ENCODE measurements at regions of chr7 and their contacts with region 1.

Region 1: DNA sequence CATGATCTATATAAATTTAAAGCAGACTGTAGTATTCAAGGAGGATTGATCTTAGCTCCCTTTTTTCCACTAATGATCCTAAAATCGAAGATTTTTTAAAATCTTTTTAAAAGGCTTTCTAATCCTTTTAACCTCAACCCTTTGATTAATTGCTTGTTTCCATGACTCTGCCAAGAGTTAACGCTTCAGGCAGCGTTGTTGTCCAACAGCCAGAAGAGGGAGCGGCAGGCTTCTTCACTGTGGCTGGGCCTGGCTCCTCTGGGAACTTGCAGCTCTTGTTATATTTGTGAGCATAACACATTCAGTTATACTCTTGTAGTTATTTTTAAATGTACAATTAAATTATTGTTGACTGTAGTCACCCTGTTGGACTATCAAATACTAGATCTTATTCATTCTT is 26.3 kb downstream of the CRCP start:
- DNase-seq: peak; percentile 56
- H3K4me3 ChIP-seq: no peak overlapping the region
- H3K27ac ChIP-seq: peak overlapping the region; percentile 7
- H3K4me1 ChIP-seq: peaks cover 20% of the 10 kb centered on the region
- H3K27me3 ChIP-seq: no peaks in the 10 kb centered on the region
- CTCF ChIP-seq: peak; percentile 40 to 76

Region 2: DNA sequence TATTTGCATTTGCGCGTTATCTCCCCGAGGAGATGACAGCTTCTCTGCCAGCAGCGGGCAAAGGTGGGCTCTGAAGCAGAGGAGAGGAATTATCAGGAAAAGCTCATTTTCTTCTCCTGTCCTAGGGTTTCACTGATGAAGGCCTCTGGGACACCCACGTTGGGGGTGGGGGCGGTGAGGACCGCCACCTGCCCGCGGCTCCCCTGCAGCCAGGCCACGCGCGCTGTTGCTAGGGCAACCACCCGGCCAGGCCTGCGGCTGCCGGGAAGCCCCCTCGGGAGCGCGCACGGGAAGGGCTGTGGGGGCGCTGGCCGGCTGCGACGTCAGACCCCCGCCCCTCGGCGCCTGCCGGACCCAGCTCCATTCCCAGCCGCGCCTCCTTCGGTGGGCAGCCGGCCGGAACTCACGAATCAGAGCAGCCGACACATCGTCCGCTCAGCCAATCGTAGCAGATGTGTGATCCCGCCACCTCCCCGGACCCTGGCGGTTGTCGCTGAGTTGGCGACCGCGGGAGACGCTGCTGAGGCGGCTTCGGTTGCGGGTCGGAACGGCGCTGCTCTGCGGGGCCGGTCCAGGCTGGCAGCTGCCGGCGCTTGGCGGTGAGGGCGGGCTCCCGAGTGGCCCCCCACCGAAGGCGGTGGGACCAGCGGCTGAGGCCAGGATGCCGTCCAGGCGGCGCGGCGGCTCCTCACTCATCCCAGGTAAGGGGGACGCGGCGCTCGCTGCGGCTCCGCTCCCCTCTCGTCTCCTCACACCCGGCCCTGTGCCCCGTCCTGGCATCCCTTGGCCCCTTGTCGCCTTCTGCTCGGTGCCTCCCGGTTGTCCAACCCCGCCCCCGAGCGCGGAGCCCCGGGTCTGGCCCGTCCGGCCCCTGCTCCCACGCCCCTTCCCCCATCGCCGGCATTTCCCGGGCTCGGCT is 64.2 kb after region 1 on chr7 and contains the start of gene TPST1:
- CTCF ChIA-PET with region 1: no interaction called
- dilution Hi-C with region 1: no loop called
- in situ Hi-C with region 1: no loop called
- intact Hi-C with region 1: loop called (anchors 5 kb)
- DNase-seq: peak; percentile 82
- H3K4me3 ChIP-seq: peak within 1 kb of the TSS; percentile 86 to 99 (median 87)
- H3K27ac ChIP-seq: peak within 1 kb of the TSS; percentile 66
- H3K4me1 ChIP-seq: peaks cover 22% of the 10 kb centered on the region
- H3K27me3 ChIP-seq: no peaks in the 10 kb centered on the region
- CTCF ChIP-seq: peak in 1 of 2 donors; percentile 67
- total RNA-seq, gene TPST1: 36.8 to 90.7 TPM

Region 3: DNA sequence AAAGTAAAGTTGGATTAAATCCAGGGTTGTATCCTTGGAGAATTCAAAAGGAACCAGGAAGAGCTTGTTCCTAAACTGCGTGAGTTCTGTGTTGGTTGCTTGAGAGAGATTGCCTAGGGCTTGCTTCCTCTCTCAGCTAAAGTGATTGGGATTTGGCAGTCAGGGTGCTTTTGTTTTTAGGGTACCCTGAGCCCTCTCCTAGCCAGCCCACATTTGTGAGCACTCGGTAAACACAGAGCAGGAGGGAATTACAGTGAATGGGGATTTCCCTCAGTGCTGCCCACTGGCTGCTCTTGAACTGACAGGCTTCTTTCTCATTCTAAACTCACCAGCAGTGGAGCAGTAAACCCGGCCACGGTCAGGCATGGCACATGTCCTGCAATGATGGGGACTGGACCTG is 211.1 kb after region 1 on chr7:
- CTCF ChIA-PET with region 1: no interaction called
- dilution Hi-C with region 1: no loop called
- in situ Hi-C with region 1: no loop called
- intact Hi-C with region 1: loop called (anchors 1 kb)
- DNase-seq: peak; percentile 76
- H3K4me3 ChIP-seq: peak overlapping the region in 2 of 3 experiments; percentile 31 to 38
- H3K27ac ChIP-seq: peak overlapping the region; percentile 92
- H3K4me1 ChIP-seq: peaks cover 55% of the 10 kb centered on the region
- H3K27me3 ChIP-seq: no peaks in the 10 kb centered on the region
- CTCF ChIP-seq: no peak

Region 4: DNA sequence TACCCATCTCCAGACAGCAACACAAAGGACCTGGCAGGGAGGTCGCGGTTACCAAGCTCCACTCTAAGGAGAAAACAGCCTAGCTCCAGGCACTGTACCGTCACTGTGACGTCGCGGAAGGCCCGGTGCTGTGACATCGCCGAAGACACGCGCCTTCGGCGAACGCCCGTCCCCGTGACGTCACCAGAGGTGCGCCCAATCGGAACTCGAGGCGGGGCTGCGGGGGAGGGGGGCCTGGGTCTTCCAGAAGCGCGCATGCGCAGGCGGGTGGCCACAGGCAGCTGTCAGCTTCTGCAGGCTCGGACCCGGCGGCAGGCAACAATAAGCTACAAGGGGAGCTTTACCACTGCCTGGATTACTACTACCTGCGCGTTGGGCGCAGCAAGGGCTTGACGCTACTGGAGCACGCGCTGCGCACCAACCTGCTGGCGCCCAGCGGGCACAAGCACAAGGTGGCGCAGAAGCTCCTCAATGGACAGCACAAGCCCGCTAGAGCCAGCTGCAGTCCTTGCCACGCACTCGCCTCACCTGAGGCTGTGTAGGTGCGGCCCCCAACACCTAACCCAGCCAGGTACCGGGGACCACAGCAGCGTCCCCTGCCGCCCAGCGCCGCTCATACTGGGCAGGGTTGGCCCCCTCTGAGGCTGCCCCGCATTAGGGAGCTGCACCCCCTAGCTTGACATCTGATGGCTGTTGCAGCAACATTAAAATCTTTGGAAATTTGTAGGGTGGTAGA is 272.6 kb after region 1 on chr7:
- CTCF ChIA-PET with region 1: no interaction called
- dilution Hi-C with region 1: no loop called
- in situ Hi-C with region 1: no loop called
- intact Hi-C with region 1: loop called (anchors 10 kb)
- DNase-seq: peak; percentile 73
- H3K4me3 ChIP-seq: peak overlapping the region; percentile 26 to 57 (median 45)
- H3K27ac ChIP-seq: peak overlapping the region; percentile 12
- H3K4me1 ChIP-seq: peaks cover 4% of the 10 kb centered on the region
- H3K27me3 ChIP-seq: no peaks in the 10 kb centered on the region
- CTCF ChIP-seq: peak; percentile 42 to 63

Region 5: GRCh38 chr7:66493235-66494181 is 352.6 kb after region 1 on chr7:
- CTCF ChIA-PET with region 1: no interaction called
- dilution Hi-C with region 1: no loop called
- in situ Hi-C with region 1: no loop called
- intact Hi-C with region 1: loop called (anchors 1 kb)
- DNase-seq: peak; percentile 95
- H3K4me3 ChIP-seq: peak overlapping the region; percentile 66 to 85 (median 82)
- H3K27ac ChIP-seq: peak overlapping the region; percentile 88
- H3K4me1 ChIP-seq: peaks cover 14% of the 10 kb centered on the region
- H3K27me3 ChIP-seq: no peaks in the 10 kb centered on the region
- CTCF ChIP-seq: no peak

Region 6: DNA sequence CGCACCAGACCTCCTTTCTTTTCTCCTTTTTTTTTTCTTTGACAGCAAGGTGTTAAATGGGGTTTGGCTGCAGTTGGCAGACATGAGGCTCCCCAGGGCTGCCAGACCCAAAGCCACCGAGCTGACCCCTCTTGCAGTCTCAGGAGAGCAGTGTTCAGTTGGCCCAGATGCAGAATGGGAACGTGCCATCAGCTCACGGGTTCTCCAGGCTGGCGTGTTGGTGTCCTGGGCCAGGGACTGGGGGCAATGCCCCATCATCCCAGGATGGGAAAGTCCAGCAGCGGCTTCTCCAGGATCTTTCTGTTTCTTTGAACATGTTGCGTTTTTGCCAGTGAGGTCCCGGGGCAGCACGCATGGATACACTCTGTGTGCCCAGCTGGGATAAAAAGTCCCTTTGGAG is 373.1 kb after region 1 on chr7:
- CTCF ChIA-PET with region 1: no interaction called
- dilution Hi-C with region 1: no loop called
- in situ Hi-C with region 1: no loop called
- intact Hi-C with region 1: loop called (anchors 5 kb)
- DNase-seq: no peak
- H3K4me3 ChIP-seq: no peak overlapping the region
- H3K27ac ChIP-seq: no peak overlapping the region
- H3K4me1 ChIP-seq: no peaks in the 10 kb centered on the region
- H3K27me3 ChIP-seq: no peaks in the 10 kb centered on the region
- CTCF ChIP-seq: no peak

Region 7: DNA sequence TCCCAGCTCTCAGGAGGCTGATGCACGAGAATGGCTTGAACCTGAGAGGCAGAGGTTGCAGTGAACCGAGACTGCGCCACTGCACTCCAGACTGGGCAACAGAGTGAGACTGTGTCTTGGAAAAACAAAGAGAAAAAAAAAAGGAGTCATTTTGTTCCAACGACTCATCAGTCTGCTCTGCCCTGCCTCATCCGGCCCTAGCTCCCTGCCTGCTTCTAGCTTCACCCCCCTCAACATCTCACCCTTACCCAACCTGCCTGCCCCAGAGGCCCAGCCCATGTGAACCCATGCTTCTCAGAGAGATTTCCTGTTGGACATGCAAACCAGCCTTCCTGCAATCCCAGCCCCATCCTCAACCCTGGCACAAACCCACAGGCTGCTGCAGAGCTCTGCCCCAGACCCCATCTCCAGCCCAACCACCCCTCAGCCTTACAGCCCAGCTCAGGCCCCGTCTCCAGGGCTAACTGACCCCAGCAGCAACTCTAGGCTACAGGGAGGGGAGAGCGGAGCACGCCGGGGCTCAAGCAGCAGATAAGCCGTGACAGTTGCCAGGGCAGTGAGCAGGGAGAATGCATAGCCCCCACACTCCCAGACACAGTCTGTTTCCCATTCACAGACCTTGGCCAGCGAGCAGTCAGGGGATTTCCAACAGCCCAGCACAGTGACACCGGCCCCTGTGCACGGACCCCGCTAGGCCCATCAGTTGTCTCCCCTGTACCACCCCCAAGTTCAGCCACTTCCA is 401.8 kb after region 1 on chr7:
- CTCF ChIA-PET with region 1: no interaction called
- dilution Hi-C with region 1: no loop called
- in situ Hi-C with region 1: no loop called
- intact Hi-C with region 1: loop called (anchors 5 kb)
- DNase-seq: no peak
- H3K4me3 ChIP-seq: no peak overlapping the region
- H3K27ac ChIP-seq: no peak overlapping the region
- H3K4me1 ChIP-seq: peaks cover 4% of the 10 kb centered on the region
- H3K27me3 ChIP-seq: no peaks in the 10 kb centered on the region
- CTCF ChIP-seq: no peak